Left ventricle myocardium inferior (tissue), 1 donor: ENCODE measurements at regions of chr3 and their contacts with region 1.

Region 1: DNA sequence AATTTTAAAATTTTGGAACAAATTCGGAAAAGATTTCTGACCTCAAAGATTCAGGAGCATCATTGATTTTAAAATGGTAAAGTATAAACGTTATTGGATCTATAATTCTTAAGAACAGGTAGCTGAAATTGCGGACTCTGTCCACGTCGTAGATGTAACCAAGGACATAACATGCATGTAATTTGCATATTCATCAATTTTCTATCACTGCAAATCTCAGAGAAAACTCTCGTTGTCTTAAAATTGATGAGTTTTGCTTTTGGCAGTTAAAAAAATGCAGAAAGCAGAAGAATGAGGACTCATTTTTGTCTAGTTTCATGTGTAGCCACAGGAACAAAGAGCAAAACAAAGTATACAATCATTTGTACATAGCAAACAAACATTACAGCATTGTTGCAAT is 1094.3 kb downstream of the SI start:
- DNase-seq: no peak
- H3K4me3 ChIP-seq: no peak overlapping the region
- H3K27ac ChIP-seq: no peak overlapping the region
- H3K4me1 ChIP-seq: no peaks in the 10 kb centered on the region
- H3K27me3 ChIP-seq: no peaks in the 10 kb centered on the region
- CTCF ChIP-seq: no peak

Region 2: GRCh38 chr3:162072656-162073164 is 1911.2 kb before region 1 on chr3:
- intact Hi-C with region 1: loop called (anchors 5 kb)
- DNase-seq: no peak
- H3K4me3 ChIP-seq: no peak overlapping the region
- H3K27ac ChIP-seq: no peak overlapping the region
- H3K4me1 ChIP-seq: no peaks in the 10 kb centered on the region
- H3K27me3 ChIP-seq: no peaks in the 10 kb centered on the region
- CTCF ChIP-seq: no peak

Region 3: DNA sequence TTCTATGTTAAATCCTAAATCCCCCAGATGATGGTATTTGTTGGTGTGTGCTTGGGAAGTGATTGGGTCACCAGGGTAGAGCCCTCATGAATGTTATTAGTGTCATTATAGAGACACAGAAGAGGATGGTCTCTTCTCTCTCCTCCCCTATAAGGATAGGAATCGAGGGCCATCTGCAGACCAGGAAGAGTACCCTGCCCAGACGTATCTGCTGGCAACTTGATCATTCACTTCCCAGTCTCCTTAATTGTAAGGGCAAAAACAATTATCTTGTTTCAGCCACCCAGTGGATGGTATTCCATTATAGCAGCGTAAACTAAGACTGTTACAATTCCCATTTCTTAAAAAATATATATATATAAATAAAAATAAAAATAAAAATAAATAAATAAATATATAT is 202.1 kb after region 1 on chr3:
- intact Hi-C with region 1: no loop called
- DNase-seq: no peak
- H3K4me3 ChIP-seq: no peak overlapping the region
- H3K27ac ChIP-seq: no peak overlapping the region
- H3K4me1 ChIP-seq: no peaks in the 10 kb centered on the region
- H3K27me3 ChIP-seq: no peaks in the 10 kb centered on the region
- CTCF ChIP-seq: no peak